ENCODE measurements at regions of chr2 and their contacts with region 1.

Region 1: DNA sequence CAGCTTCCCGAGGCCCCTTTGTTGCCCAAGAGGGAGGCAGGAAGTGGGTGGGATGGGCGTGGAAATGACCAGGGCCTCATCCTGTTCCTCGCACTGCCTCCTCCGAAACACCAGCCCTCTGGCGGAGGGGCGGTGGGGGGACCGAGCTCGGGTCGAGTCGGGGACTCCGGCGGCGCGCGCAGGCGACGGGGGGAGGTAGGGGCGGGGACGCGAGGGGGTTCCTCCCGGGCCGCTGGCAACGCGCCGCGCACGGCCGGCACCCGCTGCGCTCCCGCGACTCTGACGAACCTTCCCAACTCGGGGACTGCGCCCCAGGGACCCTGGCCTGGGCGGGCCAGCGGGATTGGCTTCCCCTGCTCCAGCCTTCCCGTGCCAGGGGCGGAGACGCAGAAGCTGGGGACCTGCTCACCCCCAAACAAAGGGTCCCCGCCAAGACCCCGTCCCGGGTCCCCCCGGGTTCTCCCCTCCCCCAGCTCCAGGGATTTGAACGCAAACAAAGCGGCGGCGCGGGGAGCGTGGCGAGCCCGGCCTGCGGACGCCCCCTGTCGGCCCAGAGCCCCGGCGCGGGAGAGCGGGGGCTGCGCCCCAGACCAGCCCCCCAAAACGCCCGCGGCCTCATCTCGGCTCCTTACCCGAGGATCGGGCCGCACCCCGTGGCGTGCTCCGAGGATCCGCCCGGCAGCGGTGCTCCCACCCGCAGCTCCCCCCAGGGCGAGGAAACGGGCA is 1.2 kb downstream of the SEMA4C start:
- DNase-seq: peak; percentile 85 to 94 (median 91)
- H3K4me3 ChIP-seq: peak overlapping the region; percentile 65 to 94 (median 83)
- H3K27ac ChIP-seq: peak overlapping the region; percentile 54 to 95 (median 90)
- H3K4me1 ChIP-seq: peaks cover 11 to 41% of the 10 kb centered on the region in 2 donors
- H3K27me3 ChIP-seq: no peaks in the 10 kb centered on the region
- CTCF ChIP-seq: peak in 5 of 6 experiments; percentile 28 to 66 (median 47)
- POLR2A ChIP-seq: peak; percentile 20 to 43

Region 2: GRCh38 chr2:96325041-96325883 is 543.5 kb before region 1 on chr2 and contains the start of gene ITPRIPL1:
- intact Hi-C with region 1: no loop called
- DNase-seq: peak in 1 of 7 donors; percentile 19
- H3K4me3 ChIP-seq: peak within 1 kb of the TSS in 2 of 4 donors; percentile 18 to 43
- H3K27ac ChIP-seq: no peak within 1 kb of the TSS
- H3K4me1 ChIP-seq: peaks cover 10 to 22% of the 10 kb centered on the region in 2 donors
- H3K27me3 ChIP-seq: peaks cover 13% of the 10 kb centered on the region
- CTCF ChIP-seq: no peak
- POLR2A ChIP-seq: no peak
- total RNA-seq, gene ITPRIPL1: 0.32 to 3.8 (median 1.0) TPM in 8 of 9 donors, not detected in the other

Region 3: DNA sequence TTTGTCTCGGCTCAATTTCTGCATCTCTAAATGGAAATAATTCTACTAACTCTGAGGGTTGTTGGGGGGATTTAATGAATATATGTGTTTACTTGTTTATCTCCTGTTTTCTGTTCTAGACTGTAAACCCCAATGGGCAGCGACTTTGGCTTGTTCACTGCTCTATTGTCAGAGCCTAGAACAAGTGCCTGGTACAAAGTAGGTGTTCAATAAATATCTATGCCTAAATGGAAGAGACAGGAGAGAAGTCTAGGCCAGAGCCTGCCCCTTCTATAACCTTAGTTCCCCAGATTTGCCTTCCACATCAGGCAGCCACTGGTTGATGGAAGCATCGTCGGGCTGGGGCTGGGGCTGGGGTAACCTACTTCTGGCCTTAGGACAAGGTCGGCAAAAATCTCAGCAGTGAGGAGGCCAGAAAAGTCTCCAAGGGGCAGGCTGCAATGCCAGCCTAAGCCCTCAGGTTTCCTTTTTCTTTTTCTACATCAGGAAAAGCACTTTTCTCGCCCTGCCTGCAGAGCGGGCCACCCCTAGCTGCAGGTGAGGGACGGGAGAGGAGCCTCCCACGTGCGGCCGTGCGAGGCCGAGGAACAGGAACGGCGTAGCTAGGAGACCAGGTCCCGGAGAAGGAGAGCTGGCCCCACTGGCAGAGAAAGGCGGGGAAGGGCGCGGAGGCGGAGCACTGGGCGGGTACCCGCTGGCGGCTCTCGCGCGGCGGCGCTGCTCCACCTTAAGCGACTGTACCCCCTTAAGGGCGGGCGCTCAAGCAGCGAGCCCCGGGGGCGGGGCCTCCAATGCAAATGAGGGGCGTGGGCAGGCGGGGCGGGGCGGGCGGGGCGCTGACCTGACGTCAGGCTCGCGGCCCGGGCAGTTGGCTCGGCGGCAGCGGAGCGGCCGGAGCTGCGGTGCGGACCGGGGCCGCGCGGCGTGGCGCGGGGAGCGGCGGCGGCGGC is 108.4 kb before region 1 on chr2 and contains the start of gene CNNM4:
- intact Hi-C with region 1: loop called in 1 of 2 experiments (anchors 5 kb)
- DNase-seq: peak; percentile 94 to 98 (median 95)
- H3K4me3 ChIP-seq: peak within 1 kb of the TSS; percentile 15 to 76 (median 56)
- H3K27ac ChIP-seq: peak within 1 kb of the TSS in 3 of 5 donors; percentile 58 to 90 (median 72)
- H3K4me1 ChIP-seq: peaks cover 17 to 42% of the 10 kb centered on the region in 2 donors
- H3K27me3 ChIP-seq: no peaks in the 10 kb centered on the region
- CTCF ChIP-seq: peak in 3 of 6 experiments; percentile 26 to 32 (median 28)
- POLR2A ChIP-seq: peak in 1 of 2 donors; percentile 72
- total RNA-seq, gene CNNM4: 3.1 to 7.7 (median 4.4) TPM

Region 4: DNA sequence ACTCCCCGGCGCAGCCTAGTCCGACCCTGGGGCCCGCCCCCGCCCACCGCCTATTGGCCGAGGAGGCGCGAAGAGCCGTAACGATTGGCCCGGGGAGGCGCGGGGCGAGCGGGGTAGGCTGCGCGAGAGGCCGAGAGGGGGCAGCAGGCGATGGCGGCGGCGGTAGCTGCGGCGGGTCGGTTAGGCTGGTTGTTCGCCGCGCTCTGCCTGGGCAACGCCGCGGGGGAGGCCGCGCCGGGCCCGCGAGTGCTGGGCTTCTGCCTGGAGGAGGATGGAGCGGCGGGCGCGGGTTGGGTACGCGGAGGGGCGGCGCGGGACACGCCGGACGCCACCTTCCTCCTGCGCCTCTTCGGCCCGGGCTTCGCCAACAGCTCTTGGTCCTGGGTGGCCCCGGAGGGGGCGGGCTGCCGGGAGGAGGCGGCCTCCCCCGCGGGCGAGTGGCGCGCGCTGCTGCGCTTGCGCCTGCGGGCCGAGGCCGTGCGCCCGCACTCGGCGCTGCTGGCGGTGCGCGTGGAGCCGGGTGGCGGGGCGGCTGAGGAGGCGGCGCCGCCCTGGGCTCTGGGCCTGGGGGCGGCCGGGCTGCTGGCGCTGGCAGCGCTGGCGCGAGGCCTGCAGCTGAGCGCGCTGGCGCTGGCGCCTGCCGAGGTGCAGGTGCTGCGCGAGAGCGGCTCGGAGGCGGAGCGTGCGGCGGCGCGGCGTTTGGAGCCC is 52.4 kb before region 1 on chr2 and contains the start of gene CNNM3:
- intact Hi-C with region 1: loop called in 1 of 2 experiments (anchors 10 kb)
- DNase-seq: peak; percentile 96 to 98 (median 96)
- H3K4me3 ChIP-seq: peak within 1 kb of the TSS; percentile 27 to 69 (median 58)
- H3K27ac ChIP-seq: peak within 1 kb of the TSS in 4 of 5 donors; percentile 74 to 98 (median 90)
- H3K4me1 ChIP-seq: peaks cover 22 to 50% of the 10 kb centered on the region in 2 donors
- H3K27me3 ChIP-seq: no peaks in the 10 kb centered on the region
- CTCF ChIP-seq: peak; percentile 16 to 70 (median 58)
- POLR2A ChIP-seq: peak; percentile 56 to 88
- total RNA-seq, gene CNNM3: 10.3 to 42.4 (median 23.6) TPM

Region 5: DNA sequence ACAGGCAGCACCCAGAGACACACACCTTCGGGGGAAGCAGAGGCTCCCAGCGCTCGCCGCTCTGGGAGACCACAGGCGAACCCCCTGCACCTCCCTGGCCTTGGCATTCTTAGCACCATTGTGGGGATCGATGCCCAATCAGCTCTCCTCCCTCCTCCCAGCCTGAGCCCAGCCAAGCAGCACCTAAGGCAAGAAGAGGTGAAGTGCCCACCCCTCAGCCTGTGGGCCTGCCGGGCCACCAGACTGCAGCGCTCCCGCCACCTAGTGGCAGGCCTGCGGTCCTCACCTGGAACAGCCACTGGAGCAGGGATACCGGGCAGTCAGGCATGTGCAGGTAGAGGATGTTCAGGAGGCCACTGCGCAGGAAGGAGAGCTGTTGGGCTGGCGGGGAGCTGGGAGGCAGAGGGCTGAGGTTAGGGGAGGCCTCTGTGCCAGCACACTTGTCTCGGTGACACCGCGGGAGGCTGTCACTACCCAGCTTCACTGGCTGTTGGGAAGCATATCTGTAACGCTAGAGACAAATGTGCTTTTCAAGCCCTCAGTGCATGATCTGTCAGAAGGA is 82.5 kb after region 1 on chr2:
- intact Hi-C with region 1: loop called (anchors 5 kb)
- DNase-seq: peak; percentile 49 to 84 (median 72)
- H3K4me3 ChIP-seq: no peak overlapping the region
- H3K27ac ChIP-seq: no peak overlapping the region
- H3K4me1 ChIP-seq: peaks cover 0 to 27% of the 10 kb centered on the region in 2 donors
- H3K27me3 ChIP-seq: no peaks in the 10 kb centered on the region
- CTCF ChIP-seq: peak; percentile 83 to 94 (median 88)
- POLR2A ChIP-seq: no peak

Region 6: DNA sequence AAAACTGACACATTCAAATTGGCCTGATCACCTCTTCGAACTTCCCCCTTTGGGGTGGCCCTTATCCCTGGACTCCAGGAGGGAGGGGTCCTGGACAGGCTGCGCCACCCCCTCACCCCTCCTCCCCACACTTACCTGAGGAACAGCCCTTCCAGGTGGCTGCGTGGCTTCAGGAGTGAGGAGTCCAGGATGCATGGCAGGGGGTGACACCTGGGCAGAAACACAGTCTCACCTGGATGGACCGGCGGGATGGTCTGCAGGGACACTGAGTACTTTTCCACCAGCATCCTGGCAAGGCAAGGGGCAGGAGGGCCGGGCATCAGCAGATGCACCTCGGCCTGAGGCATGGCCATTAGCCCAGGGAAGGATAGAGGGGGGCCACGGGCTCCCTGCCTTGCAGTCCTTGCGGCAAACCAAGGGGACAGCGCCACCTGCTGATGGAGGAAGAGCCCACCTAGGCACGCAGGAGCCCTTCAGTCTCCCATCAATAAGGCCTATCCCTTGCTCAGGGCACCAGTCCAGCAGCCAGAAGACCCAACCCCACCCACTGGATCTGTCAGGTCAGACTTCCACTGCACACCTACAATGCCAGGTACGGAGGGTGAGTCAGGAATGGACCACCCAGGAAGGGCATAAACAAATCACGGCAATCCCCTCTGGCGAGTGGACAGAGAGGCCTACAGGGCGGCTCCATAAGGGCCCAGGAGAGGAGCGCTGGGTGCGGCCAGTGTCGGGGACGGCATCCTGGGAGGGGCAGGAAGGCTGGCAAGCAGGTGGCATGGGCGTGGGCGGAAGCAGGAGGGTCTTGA is 91.6 kb after region 1 on chr2:
- intact Hi-C with region 1: loop called in 1 of 2 experiments (anchors 5 kb)
- DNase-seq: peak; percentile 79 to 94 (median 90)
- H3K4me3 ChIP-seq: no peak overlapping the region
- H3K27ac ChIP-seq: no peak overlapping the region
- H3K4me1 ChIP-seq: peaks cover 0 to 6% of the 10 kb centered on the region in 2 donors
- H3K27me3 ChIP-seq: no peaks in the 10 kb centered on the region
- CTCF ChIP-seq: peak; percentile 76 to 93 (median 86)
- POLR2A ChIP-seq: no peak

Region 7: DNA sequence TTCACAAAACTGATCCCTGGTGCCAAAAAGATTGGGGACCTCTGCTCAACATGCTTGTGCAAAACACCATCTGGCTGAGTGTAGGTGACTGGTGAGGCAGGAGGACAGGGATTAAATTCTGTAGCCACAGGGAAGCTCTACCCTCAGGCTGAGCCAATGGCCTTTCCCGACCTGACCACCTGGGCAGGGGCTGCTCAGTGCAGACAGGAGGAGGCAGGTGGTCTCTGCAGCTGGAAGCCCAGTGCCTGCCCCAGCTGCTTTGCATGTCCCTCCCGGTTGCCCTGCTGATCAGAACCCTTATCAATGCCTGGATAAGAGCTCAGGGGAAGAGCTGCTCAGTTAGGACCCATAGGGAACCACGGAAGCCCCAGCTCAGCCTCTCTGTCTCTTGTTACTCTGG is 479.6 kb after region 1 on chr2:
- intact Hi-C with region 1: no loop called
- DNase-seq: peak in 1 of 7 donors; percentile 27
- H3K4me3 ChIP-seq: no peak overlapping the region
- H3K27ac ChIP-seq: no peak overlapping the region
- H3K4me1 ChIP-seq: no peaks in the 10 kb centered on the region
- H3K27me3 ChIP-seq: no peaks in the 10 kb centered on the region
- CTCF ChIP-seq: no peak
- POLR2A ChIP-seq: no peak

Measured in adrenal gland (tissue), 19 donors.